ENCODE measurements at regions of chr16 and their contacts with region 1.

Region 1: GRCh38 chr16:1971796-1972489 is at the start of gene TBL3:
- DNase-seq: peak; percentile 98
- ATAC-seq: peak; percentile 92
- H3K4me3 Mint-ChIP-seq: peak within 1 kb of the TSS; percentile 92
- H3K27ac Mint-ChIP-seq: peak within 1 kb of the TSS; percentile 98
- H3K4me1 Mint-ChIP-seq: peaks cover 25% of the 10 kb centered on the region
- H3K27me3 Mint-ChIP-seq: no peaks in the 10 kb centered on the region
- total RNA-seq, gene TBL3: 41.9 to 42.3 TPM

Region 2: DNA sequence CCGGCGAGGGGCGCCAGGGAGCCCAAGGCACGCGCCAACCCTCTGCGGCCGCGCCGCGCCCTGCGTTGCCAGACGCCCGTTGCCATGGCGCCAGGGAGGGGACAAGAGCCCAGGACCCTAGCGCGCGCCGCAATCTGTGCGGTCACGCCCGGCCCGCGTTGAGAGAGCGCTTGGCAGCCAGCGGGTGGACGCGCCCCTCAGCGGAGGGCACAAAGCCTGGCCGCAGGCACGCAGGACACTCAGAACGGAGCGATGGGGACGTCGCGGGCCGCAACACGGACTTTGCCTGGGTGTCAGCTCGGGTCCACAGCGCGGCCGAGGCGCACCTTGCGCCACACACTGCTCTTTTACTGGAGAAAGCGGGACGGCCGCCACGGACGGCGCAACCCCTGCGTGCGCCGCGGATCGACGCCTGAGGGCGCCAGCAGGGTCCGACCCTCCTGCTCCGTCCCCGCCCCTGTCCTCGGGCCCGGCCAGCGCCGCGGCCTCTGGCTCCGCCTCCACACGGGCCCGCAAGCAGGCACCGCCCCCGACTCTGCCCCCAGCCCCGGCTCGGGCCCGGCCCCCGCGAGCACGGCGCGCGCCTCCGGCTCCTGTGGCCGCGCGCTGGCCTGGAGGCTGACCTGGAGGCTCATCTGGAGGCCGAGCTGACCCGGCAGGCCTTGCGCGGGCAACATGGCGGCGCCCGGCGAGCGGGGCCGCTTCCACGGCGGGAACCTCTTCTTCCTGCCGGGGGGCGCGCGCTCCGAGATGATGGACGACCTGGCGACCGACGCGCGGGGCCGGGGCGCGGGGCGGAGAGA is 11.8 kb after region 1 on chr16 and contains the start of gene GFER:
- CTCF ChIA-PET with region 1: interaction called, 13 read pairs
- DNase-seq: peak; percentile 84
- ATAC-seq: peak; percentile 90
- H3K4me3 Mint-ChIP-seq: peak within 1 kb of the TSS; percentile 83
- H3K27ac Mint-ChIP-seq: peak within 1 kb of the TSS; percentile 36
- H3K4me1 Mint-ChIP-seq: peaks cover 13% of the 10 kb centered on the region
- H3K27me3 Mint-ChIP-seq: peaks cover 42% of the 10 kb centered on the region
- total RNA-seq, gene GFER: 33.5 to 40.9 TPM